Dendritic cell treated with granulocyte-macrophage colony-stimulating factor and Interleukin-4, amounts not matched to agents 40 ng/mL and 50 ng/mL, for 4 days (primary cell): ENCODE measurements at regions of chr7 and their contacts with region 1.

Region 1: GRCh38 chr7:101602484-101603241 is 26.4 kb downstream of the MYL10 start:
- H3K4me3 Mint-ChIP-seq: no peak overlapping the region
- H3K27ac Mint-ChIP-seq: no peak overlapping the region
- H3K4me1 Mint-ChIP-seq: no peaks in the 10 kb centered on the region
- H3K27me3 Mint-ChIP-seq: peaks cover 11% of the 10 kb centered on the region

Region 2: GRCh38 chr7:102236592-102237287 is 634.1 kb after region 1 on chr7:
- intact Hi-C with region 1: loop called (anchors 1 kb)
- H3K4me3 Mint-ChIP-seq: no peak overlapping the region
- H3K27ac Mint-ChIP-seq: no peak overlapping the region
- H3K4me1 Mint-ChIP-seq: no peaks in the 10 kb centered on the region
- H3K27me3 Mint-ChIP-seq: no peaks in the 10 kb centered on the region

Region 3: GRCh38 chr7:102404005-102404861 is 801.6 kb after region 1 on chr7:
- intact Hi-C with region 1: no loop called
- H3K4me3 Mint-ChIP-seq: no peak overlapping the region
- H3K27ac Mint-ChIP-seq: no peak overlapping the region
- H3K4me1 Mint-ChIP-seq: no peaks in the 10 kb centered on the region
- H3K27me3 Mint-ChIP-seq: no peaks in the 10 kb centered on the region